ENCODE measurements at regions of chr1 and their contacts with region 1.

Region 1: DNA sequence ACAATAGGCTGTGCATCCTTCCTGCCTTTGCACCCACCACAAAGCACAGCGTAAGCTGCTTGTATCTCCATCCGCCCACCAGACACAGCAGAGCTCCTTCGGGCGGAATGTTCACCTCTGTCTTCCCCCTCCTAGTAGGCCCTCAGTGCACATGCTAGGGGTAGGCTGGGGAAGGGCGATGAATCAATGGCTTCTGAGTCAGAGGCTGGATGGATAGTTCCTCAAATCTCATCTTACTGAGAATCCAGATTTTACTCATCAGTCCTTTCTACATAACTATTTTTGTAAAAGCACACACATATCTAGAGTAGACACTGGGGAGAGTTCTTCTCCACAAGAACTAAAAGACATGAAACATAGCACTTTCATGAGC is 73.8 kb downstream of the BCAR3 start:
- DNase-seq: no peak
- H3K4me3 Mint-ChIP-seq: peak overlapping the region; percentile 32
- H3K27ac Mint-ChIP-seq: no peak overlapping the region
- H3K4me1 Mint-ChIP-seq: peaks cover 25% of the 10 kb centered on the region
- H3K27me3 Mint-ChIP-seq: peaks cover 37% of the 10 kb centered on the region

Region 2: GRCh38 chr1:93447516-93448291 is 160.1 kb before region 1 on chr1 and contains the start of gene FNBP1L:
- intact Hi-C with region 1: loop called (anchors 5 kb)
- DNase-seq: no peak
- H3K4me3 Mint-ChIP-seq: peak within 1 kb of the TSS; percentile 86
- H3K27ac Mint-ChIP-seq: no peak within 1 kb of the TSS
- H3K4me1 Mint-ChIP-seq: peaks cover 18% of the 10 kb centered on the region
- H3K27me3 Mint-ChIP-seq: peaks cover 62% of the 10 kb centered on the region
- total RNA-seq, gene FNBP1L: 0.16 and 0.29 TPM in 2 replicates

Region 3: GRCh38 chr1:93692983-93693591 is 85.3 kb after region 1 on chr1:
- intact Hi-C with region 1: loop called (anchors 5 kb)
- DNase-seq: peak; percentile 26
- H3K4me3 Mint-ChIP-seq: no peak overlapping the region
- H3K27ac Mint-ChIP-seq: peak overlapping the region; percentile 63
- H3K4me1 Mint-ChIP-seq: no peaks in the 10 kb centered on the region
- H3K27me3 Mint-ChIP-seq: peaks cover 13% of the 10 kb centered on the region

Region 4: GRCh38 chr1:93715529-93716126 is 107.8 kb after region 1 on chr1:
- intact Hi-C with region 1: loop called (anchors 5 kb)
- DNase-seq: no peak
- H3K4me3 Mint-ChIP-seq: no peak overlapping the region
- H3K27ac Mint-ChIP-seq: peak overlapping the region; percentile 56
- H3K4me1 Mint-ChIP-seq: peaks cover 41% of the 10 kb centered on the region
- H3K27me3 Mint-ChIP-seq: peaks cover 6% of the 10 kb centered on the region

Region 5: GRCh38 chr1:94017155-94017829 is 409.5 kb after region 1 on chr1:
- intact Hi-C with region 1: loop called (anchors 5 kb)
- DNase-seq: peak; percentile 42
- H3K4me3 Mint-ChIP-seq: peak overlapping the region; percentile 28
- H3K27ac Mint-ChIP-seq: peak overlapping the region; percentile 81
- H3K4me1 Mint-ChIP-seq: peaks cover 40% of the 10 kb centered on the region
- H3K27me3 Mint-ChIP-seq: peaks cover 6% of the 10 kb centered on the region